Head of caudate nucleus (tissue), 42 donors: ENCODE measurements at regions of chr20 and their contacts with region 1.

Region 1: GRCh38 chr20:1802385-1803060 is 92.7 kb upstream of the SIRPA start:
- DNase-seq: peak; percentile 79 to 96 (median 91)

Region 2: GRCh38 chr20:1894951-1895673 is 92.6 kb after region 1 on chr20 and contains the start of gene SIRPA:
- intact Hi-C with region 1: loop called (anchors 2 kb)
- DNase-seq: peak in 41 of 42 donors; percentile 57 to 91 (median 80)